ENCODE measurements at regions of chr17 and their contacts with region 1.

Region 1: DNA sequence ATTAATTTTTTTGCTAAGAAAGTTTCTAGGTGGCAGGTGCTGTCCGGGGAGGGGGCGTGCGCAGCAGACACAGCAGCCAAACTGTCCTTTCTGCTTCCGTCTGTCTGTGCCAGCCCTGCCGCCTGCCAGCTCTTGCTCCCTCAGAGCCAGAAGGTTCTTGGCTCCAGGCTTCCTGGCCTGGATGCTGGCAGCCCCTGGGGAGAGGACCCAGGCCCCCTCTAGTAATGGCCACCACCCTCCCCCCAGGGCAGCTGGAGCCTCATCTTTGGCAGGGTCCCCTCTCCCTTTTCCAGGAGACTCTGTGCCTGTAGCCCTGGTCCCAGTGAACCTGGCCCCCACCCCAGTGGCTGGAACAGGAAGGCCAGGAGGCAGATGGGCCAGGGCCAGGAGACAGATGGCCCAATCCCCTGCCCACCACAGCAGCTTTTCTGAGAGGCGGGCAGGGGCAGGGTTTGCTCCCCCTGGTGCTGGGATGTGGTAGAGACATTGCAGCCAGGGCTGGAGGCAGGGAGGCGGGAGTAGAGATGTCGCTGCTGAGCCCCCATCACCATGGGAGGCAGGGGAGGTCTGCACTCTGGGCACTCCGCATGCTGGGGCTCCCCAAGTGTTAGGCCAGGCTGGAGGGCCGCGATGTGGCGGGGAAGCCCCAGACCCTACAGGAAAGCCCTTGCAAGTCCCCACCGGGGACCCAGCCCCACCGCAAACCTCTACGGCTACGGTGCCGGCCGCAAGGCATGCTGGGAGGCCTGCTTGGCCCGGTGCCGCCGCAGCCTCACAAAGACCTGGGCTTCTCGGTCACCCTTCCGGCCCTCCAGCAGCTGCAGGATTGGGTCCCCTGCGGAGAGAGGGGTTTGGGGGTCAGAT is 16.7 kb downstream of the UNC13D start:
- DNase-seq: peak; percentile 81 to 93 (median 90)
- H3K4me3 ChIP-seq: peak overlapping the region in 2 of 7 experiments; percentile 24 to 40
- H3K27ac ChIP-seq: peak overlapping the region in 1 of 2 experiments; percentile 47
- H3K4me1 ChIP-seq: peaks cover 2 to 44% (median 36%) of the 10 kb centered on the region in 4 experiments
- H3K27me3 ChIP-seq: no peaks in the 10 kb centered on the region

Region 2: DNA sequence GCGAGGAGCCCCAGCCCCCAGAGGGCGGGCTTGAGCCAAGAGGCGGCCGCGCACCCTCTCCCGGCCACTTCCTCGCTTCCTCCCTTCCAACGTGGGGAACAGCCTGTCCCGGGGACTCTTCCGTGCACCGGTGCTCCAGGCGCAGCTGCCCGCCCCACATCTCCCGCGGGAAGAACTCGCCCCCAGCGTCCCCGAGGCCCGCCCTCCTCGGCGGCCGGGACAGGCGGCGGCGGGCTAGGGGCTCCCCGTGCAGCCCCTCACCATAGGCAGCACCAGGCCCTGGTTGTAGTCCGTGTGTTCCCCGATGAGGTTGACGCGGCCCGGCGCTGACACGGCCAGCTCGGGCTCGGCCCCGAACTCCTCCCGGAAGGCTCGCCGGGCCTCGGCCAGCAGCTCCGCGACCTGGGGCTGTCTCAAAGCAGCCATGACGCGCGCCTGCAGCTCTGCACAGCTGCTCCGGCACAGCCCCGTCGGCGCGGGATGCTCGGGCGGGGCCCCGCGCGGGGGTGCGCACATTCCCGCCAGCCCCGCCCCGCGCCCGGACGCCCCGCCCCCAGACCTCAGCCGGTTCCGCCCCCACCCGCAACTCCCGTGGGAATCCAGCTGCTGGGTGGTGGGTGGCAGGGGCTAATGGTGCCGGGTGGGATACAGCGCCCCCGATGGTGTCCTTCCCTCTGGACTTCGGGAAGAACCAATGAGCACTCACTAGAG is 62.6 kb before region 1 on chr17 and contains the start of gene GALK1:
- CTCF ChIA-PET with region 1: interaction called, 55 read pairs
- POLR2A ChIA-PET with region 1: interaction called, 5 read pairs
- DNase-seq: peak; percentile 69 to 80 (median 78)
- H3K4me3 ChIP-seq: peak within 1 kb of the TSS; percentile 55 to 86 (median 75)
- H3K27ac ChIP-seq: peak within 1 kb of the TSS in 1 of 2 experiments; percentile 61
- H3K4me1 ChIP-seq: peaks cover 0 to 19% (median 17%) of the 10 kb centered on the region in 4 experiments
- H3K27me3 ChIP-seq: no peaks in the 10 kb centered on the region

Region 3: DNA sequence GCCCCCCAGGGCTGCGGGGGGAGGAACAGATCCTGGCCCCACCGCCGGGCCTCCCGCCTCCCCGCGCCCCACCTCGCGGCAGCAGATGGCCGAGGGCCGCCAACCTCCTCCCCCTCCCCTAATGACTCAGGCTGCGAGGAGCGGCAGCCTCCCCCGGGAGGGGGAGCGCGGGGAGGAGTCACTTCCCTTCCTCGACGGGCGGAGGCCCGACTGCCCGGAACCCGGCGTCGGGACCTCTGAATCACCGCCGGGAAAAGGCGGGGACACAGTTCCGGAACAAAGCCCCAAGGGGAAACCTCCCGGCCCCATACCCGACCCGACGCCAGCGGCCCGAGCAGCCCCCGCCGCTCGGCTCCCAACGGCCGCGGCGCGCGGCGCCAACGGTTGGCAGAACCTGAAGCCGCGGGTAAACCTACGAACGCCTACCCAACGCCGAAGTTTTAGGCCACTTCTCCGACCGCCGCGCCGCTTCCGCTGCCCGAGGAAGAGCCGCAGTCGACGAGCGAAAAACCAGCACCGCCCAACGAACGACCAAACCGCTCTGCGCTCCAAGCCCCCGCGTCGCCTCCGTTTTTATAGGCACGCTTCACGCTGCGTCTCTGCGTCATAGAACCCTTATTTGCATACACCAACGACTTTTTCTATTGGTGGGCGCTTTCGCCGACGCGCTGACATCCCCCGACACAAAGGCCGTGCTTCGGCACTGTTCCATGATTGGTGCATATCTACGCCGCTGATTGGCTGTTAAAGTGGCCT is 48.1 kb before region 1 on chr17:
- CTCF ChIA-PET with region 1: interaction called, 16 read pairs
- POLR2A ChIA-PET with region 1: interaction called, 39 read pairs
- DNase-seq: peak; percentile 99 to 100 (median 100)
- H3K4me3 ChIP-seq: peak overlapping the region; percentile 84 to 99 (median 90)
- H3K27ac ChIP-seq: peak overlapping the region; percentile 89 to 96
- H3K4me1 ChIP-seq: peaks cover 28 to 51% (median 34%) of the 10 kb centered on the region in 4 experiments
- H3K27me3 ChIP-seq: no peaks in the 10 kb centered on the region

Region 4: DNA sequence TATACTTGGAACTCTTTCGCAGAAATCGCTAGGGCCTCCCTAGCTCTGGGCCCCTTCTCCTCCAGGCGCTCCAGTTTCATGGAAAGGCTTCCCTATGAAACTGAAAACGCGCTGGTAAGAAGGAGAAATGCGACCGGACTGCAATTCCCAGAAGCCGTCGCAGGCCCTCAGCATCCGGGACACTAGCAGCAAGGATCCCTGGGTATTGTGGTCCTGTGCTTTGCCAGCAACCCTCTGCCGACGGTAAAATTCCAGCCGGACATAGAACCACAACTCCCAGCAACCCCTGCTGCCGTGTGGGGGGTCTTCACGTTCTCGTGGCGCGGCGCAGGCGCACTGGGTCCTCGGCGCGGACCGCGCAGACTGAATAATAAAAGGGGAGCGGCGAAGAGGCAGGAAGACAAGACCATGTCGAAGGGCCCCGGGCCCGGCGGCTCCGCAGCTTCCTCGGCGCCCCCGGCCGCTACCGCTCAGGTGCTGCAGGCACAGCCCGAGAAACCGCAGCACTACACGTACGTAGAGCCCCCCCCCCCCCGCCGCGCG is 42.9 kb before region 1 on chr17 and contains the start of gene UNK:
- CTCF ChIA-PET with region 1: interaction called, 23 read pairs
- POLR2A ChIA-PET with region 1: interaction called, 39 read pairs
- DNase-seq: peak; percentile 99
- H3K4me3 ChIP-seq: peak within 1 kb of the TSS; percentile 67 to 91 (median 81)
- H3K27ac ChIP-seq: peak within 1 kb of the TSS; percentile 98 to 99
- H3K4me1 ChIP-seq: peaks cover 30 to 52% (median 38%) of the 10 kb centered on the region in 4 experiments
- H3K27me3 ChIP-seq: no peaks in the 10 kb centered on the region

Region 5: DNA sequence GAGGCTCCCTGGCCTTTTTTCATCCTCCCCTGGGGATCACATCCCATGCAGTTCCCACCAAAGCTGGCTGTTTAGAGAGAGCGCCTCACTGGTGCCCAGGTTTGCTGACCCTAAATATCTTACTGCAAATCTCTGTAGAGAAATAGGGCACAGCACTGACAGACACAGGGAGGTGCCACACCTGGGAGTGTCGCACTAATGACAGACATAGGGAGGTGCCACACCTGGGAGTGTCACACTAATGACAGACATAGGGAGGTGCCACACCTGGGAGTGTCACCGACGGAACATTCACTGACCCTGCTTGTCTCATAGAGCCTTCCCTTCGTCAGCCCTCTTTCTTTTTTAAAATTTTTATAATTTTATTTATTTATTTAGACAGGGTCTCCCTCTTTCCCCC is 17.3 kb before region 1 on chr17:
- CTCF ChIA-PET with region 1: interaction called, 18 read pairs
- POLR2A ChIA-PET with region 1: interaction called, 4 read pairs
- DNase-seq: no peak
- H3K4me3 ChIP-seq: no peak overlapping the region
- H3K27ac ChIP-seq: no peak overlapping the region
- H3K4me1 ChIP-seq: no peaks in the 10 kb centered on the region
- H3K27me3 ChIP-seq: no peaks in the 10 kb centered on the region

Region 6: DNA sequence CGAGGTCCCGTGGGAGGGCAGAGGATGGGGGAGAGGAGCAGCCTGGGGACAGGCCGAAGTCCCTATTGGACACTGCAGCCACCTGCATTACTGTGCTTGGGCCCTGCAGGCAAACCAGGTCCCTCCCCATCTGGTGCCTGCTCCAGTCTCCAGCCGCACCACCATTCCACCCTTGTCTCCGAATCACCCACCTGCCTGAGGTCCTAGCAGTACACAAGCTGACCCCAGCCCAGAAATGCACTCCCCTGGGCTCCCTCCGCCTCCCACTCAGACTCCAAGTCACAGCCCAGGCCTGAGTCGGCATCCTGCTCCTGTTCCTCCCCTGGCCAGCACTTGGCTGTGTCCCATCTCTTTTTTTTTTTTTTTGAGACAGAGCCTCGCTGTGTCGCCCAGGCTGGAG is 10.4 kb after region 1 on chr17:
- CTCF ChIA-PET with region 1: interaction called, 174 read pairs
- POLR2A ChIA-PET with region 1: interaction called, 28 read pairs
- DNase-seq: no peak
- H3K4me3 ChIP-seq: no peak overlapping the region
- H3K27ac ChIP-seq: no peak overlapping the region
- H3K4me1 ChIP-seq: peaks cover 5 to 31% (median 24%) of the 10 kb centered on the region in 4 experiments
- H3K27me3 ChIP-seq: no peaks in the 10 kb centered on the region

Region 7: GRCh38 chr17:75845049-75845860 is 17.8 kb after region 1 on chr17:
- CTCF ChIA-PET with region 1: interaction called, 174 read pairs
- POLR2A ChIA-PET with region 1: interaction called, 28 read pairs
- DNase-seq: peak; percentile 83 to 91 (median 90)
- H3K4me3 ChIP-seq: peak overlapping the region in 6 of 7 experiments; percentile 36 to 84 (median 78)
- H3K27ac ChIP-seq: peak overlapping the region; percentile 90 to 95
- H3K4me1 ChIP-seq: peaks cover 0 to 61% (median 53%) of the 10 kb centered on the region in 4 experiments
- H3K27me3 ChIP-seq: no peaks in the 10 kb centered on the region